Prostate gland (tissue), 2 donors: ENCODE measurements at regions of chr1 and their contacts with region 1.

Region 1: GRCh38 chr1:12669529-12670068 is 25.7 kb downstream of the AADACL4 start:
- DNase-seq: no peak
- H3K4me3 ChIP-seq: no peak overlapping the region
- H3K27ac ChIP-seq: no peak overlapping the region
- H3K4me1 ChIP-seq: no peaks in the 10 kb centered on the region
- H3K27me3 ChIP-seq: no peaks in the 10 kb centered on the region
- CTCF ChIP-seq: no peak
- POLR2A ChIP-seq: no peak

Region 2: DNA sequence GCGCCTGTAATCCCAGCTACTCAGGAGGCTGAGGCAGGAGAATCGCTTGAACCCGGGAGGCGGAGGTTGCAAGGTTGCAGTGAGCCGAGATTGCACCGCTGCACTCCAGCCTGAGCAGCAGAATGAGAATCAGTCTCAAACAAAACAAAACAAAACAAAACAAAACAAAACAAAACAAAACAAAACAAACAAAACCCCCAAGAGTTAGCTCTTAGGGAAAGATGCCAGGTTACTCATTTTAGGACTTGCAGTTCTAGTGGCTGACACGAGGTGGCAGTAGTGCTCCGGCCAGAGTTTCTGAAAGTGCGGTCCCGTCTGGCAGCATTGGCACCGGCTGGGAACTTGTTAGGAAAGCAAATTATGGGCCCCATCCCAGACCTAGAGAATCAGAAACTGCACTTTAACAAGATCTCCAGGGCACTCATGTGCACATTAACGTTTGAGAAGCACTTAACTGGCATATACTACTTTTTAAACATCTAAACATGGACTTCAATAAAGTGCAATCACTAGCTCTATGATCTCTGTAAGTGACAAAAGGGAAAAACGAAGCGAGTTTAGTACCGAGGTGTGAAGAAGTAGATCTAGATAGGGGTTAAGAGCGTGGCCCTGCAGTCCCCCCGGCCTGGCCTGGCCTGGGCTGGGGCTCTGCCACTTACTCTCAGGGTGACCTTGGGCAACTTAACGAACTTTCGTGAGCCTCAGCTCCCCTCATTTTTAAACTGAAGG is 544.7 kb before region 1 on chr1:
- intact Hi-C with region 1: loop called (anchors 10 kb)
- DNase-seq: peak; percentile 72
- H3K4me3 ChIP-seq: no peak overlapping the region
- H3K27ac ChIP-seq: no peak overlapping the region
- H3K4me1 ChIP-seq: no peaks in the 10 kb centered on the region
- H3K27me3 ChIP-seq: peaks cover 3% of the 10 kb centered on the region
- CTCF ChIP-seq: peak; percentile 95 to 98 (median 97)
- POLR2A ChIP-seq: no peak